Posterior vena cava (tissue), 2 donors: ENCODE measurements at regions of chr7 and their contacts with region 1.

Region 1: DNA sequence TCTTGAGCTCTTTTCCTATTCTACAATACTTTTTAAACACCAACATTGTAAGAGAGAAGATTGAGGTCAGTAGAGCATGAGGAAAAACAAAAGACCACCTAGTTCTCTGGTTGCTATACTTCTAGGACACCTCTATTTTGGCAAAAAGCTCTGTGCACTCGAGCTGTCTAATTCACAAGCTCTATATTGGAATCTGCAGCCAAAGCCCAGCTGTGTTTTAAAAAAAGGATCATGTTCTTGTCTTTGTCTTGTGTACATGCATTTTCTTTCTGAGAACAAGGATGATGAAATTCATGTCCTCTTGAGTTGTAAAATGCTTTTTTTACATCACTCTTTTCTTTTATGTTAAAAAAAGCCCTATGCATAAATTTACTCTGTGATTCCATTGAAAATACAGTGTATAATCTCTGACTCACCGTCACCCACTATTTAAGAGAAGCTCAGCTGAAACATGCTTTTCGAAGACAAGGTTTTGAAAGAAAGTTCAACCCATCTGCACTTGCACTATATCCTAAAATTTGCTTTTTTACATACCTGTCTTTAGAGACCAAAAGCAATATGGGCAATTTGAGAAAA is 215.5 kb upstream of the VSTM2A start:
- DNase-seq: no peak

Region 2: DNA sequence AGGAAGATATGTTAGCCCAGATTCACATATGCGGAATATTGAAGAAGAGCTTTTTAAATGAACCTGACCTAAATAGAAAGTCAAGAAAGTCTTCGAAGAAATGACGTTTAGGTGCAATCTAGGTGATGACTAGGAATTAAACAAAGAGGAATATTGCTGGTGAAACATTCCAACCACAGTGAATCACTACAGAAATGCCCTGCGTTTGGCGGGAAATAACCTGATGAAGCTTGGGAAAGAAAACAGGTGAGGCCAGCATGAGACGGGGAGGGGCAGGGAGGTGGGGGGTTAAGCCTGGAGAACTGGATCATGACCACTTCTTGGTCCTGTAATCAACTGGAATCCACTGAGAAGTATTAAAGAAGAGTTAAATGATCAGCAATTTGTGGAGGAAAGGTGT is 83.9 kb before region 1 on chr7:
- intact Hi-C with region 1: loop called in 1 of 2 experiments (anchors 10 kb)
- DNase-seq: no peak

Region 3: DNA sequence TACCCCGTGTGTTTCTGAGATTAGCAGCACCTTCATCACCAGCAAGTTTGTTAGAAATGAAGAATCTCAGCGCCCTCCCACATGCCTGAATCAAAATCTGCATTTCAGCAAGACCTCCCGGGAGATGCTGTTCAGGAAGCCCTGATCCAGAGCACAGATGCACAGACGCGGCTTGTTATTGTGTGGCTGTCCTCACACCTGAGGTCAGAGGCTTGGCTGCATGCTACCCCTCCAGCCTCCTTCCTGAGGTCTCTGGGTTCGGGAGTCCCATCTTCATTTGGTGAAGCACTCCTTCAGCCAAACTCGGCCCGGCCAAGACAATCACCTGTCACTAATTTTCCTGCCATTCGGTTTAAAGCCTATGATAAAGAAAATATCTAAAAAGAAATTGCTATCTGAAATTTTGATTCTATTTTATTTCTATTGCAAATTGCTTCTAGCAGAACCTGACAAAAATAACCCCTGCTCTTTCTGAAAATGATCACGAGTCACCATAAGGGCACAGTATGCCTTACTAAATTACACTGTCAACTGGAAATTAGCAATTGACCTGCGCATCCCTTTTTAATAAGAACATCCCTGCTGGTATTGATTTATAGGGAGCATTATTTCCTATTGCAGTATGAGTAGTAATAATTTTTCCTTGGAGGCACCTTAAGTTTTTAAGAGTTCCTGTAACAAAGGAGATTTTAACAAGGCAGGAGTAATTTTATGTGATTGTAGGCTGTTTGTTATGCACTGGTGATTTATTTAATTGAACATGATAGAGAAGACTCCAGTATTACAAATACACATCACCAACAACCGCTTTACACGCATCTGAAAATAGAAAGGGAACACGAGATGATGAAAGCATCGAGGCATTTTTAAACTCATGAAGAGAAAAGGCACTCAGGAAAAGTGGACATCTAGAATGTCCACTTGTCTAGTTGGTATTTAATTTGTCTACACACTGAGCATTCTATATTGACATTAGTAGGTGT is 265.0 kb after region 1 on chr7:
- intact Hi-C with region 1: no loop called
- DNase-seq: no peak

Region 4: GRCh38 chr7:54985405-54986330 is 659.0 kb after region 1 on chr7:
- intact Hi-C with region 1: no loop called
- DNase-seq: no peak